ENCODE measurements at regions of chr10 and their contacts with region 1.

Region 1: GRCh38 chr10:123008439-123009205 is at the starts of genes ACADSB and IKZF5:
- DNase-seq: peak; percentile 88 to 99 (median 97)
- ATAC-seq: peak; percentile 83 to 86
- H3K4me3 Mint-ChIP-seq: peak within 1 kb of the TSS; percentile 96 to 100 (median 99)
- H3K27ac Mint-ChIP-seq: peak within 1 kb of the TSS; percentile 99 to 100 (median 100)
- H3K4me1 Mint-ChIP-seq: peaks cover 30 to 66% (median 59%) of the 10 kb centered on the region in 4 donors
- H3K27me3 Mint-ChIP-seq: no peaks in the 10 kb centered on the region
- polyA plus RNA-seq, gene ACADSB: 28.3 to 46.4 (median 33.4) TPM
- polyA plus RNA-seq, gene IKZF5: 13.1 to 22.2 (median 15.8) TPM

Region 2: GRCh38 chr10:122910310-122910709 is 98.3 kb before region 1 on chr10 and contains the start of gene FAM24A:
- POLR2A ChIA-PET with region 1: no interaction called
- DNase-seq: no peak
- ATAC-seq: no peak
- H3K4me3 Mint-ChIP-seq: no peak within 1 kb of the TSS
- H3K27ac Mint-ChIP-seq: no peak within 1 kb of the TSS
- H3K4me1 Mint-ChIP-seq: no peaks in the 10 kb centered on the region
- H3K27me3 Mint-ChIP-seq: peaks cover 7 to 30% (median 14%) of the 10 kb centered on the region in 5 donors
- polyA plus RNA-seq, gene FAM24A: not detected

Region 3: DNA sequence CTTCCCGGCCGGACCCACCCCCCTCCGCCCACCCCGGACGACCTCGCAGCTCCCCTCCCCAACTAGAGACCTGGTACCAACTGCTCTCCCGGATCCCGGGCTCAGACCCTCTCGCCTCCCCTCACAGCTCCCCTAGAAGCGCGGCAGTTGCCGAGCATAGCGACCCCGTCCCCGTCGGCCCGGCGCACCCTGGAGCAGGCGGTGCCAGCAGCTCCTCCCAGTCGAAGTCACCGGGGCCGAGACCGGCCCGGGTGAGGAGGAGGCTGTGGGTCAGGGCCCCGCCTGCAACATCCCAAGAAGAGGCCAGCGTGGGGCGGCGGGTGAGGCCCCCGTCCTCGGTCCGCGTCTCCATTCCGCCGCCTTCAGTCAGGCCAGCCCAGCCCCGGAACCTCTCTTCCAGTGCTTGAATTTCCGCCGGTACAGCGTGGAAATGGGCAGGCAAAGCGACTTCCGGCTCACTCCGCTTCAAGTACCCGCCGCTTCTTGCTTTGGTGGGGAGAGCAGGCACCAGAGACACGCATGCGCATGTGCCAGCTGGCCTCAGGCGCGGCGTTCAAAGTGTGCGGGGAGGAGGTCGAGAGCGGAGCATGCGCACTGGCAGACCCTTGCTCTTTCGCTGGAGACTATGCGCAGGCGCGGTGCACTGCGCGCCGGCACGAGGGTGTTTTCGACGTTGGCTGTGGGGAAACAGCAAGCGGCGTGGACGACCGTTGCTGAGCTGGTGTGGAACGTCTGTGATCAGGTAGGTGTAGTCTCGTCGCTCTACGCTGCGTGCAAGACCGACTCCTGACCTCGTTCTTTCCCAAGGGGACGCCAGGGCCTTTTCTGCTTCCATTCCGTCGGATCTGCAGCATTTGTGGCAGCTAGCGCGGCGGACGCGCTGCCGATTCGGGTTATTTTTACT is 54.5 kb before region 1 on chr10 and contains the start of gene C10orf88:
- POLR2A ChIA-PET with region 1: interaction called, 41 read pairs
- DNase-seq: peak; percentile 89 to 99 (median 97)
- ATAC-seq: peak; percentile 96
- H3K4me3 Mint-ChIP-seq: peak within 1 kb of the TSS; percentile 85 to 95 (median 93)
- H3K27ac Mint-ChIP-seq: peak within 1 kb of the TSS; percentile 84 to 98 (median 90)
- H3K4me1 Mint-ChIP-seq: peaks cover 19 to 38% (median 33%) of the 10 kb centered on the region in 4 donors
- H3K27me3 Mint-ChIP-seq: peaks cover 0 to 3% (median 0%) of the 10 kb centered on the region in 5 donors
- polyA plus RNA-seq, gene C10orf88: 6.0 to 8.8 (median 7.0) TPM

Region 4: DNA sequence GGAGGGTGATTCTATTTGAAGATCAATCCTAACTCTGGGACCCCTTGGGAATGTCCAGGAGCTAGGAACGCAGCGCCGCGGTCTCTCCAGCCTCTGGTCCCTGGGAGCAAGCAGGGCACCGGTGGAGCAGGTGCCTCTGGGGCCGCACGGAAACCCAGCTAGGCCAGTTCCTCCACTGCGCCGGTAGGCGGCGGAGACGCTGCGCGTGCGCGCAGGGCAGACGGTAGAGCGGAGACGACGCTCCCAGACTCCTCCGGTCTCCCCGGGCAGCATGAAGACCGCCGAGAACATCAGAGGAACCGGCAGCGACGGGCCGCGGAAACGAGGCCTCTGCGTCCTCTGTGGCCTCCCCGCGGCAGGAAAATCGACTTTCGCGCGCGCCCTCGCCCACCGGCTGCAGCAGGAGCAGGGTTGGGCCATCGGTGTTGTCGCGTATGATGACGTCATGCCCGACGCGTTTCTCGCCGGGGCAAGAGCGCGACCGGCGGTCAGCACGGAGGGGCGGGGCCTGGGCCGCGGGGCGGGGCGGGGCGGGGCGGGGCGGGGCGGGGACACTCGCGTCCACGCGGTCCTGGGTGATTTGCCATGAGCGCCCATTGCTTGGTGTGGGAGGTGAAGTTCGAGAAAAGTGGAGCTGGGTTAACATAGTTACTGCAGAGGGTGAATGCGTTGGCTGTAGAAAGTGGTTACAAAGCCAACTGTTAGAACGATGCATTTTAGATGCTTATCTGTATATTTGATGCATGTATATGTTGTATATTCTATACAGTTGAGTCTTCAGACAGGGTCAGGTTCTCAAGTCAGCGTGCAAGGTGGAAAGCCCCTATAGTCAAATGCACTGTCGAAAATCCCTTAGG is 28.2 kb before region 1 on chr10 and contains the start of gene PSTK:
- POLR2A ChIA-PET with region 1: interaction called, 66 read pairs
- DNase-seq: peak; percentile 75 to 97 (median 86)
- ATAC-seq: peak; percentile 97
- H3K4me3 Mint-ChIP-seq: peak within 1 kb of the TSS; percentile 89 to 95 (median 92)
- H3K27ac Mint-ChIP-seq: peak within 1 kb of the TSS; percentile 90 to 99 (median 98)
- H3K4me1 Mint-ChIP-seq: peaks cover 14 to 24% (median 19%) of the 10 kb centered on the region in 4 donors
- H3K27me3 Mint-ChIP-seq: no peaks in the 10 kb centered on the region
- polyA plus RNA-seq, gene PSTK: 8.8 to 11.7 (median 11.0) TPM

Region 5: DNA sequence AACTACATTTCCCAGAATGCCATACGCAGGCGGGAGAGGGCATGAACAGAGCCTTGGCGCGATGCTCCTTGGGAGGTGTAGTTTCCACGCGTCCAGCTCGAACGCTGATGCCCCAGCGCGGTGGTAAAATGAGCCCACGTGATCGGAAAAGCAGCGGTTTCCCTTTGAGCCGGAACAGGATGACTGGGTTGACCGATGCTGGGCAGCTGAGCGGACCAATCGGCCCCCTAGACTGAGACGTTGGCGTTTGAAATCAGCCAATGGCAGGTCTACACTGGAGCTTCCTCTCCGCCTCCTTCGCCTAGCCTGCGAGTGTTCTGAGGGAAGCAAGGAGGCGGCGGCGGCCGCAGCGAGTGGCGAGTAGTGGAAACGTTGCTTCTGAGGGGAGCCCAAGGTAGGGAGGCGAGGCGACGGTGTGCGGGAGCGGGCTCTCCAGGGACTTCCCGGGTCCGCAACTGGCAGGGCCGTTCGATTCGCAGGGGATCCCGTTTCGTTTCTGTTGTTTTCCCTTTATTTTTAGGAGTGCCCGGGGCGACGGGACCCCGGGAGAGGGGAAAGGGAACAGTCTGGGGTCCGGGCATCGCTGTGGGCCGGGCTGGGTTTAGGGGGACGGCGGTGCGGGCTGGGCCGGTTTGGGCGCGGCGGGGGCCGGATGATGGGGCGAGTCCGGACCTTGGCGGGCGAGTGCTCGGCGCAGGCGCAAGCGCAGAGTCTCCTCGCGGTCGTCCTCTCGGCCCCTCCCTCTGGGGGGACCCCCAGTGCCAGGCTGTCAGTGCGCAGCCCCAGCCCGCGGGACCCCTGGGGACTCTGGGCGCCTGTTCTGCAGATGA is 145.7 kb after region 1 on chr10 and contains the start of gene BUB3:
- POLR2A ChIA-PET with region 1: interaction called, 10 read pairs
- DNase-seq: peak; percentile 73 to 97 (median 90)
- ATAC-seq: peak; percentile 87 to 90
- H3K4me3 Mint-ChIP-seq: peak within 1 kb of the TSS; percentile 94 to 100 (median 100)
- H3K27ac Mint-ChIP-seq: peak within 1 kb of the TSS; percentile 95 to 99 (median 98)
- H3K4me1 Mint-ChIP-seq: peaks cover 24 to 74% (median 72%) of the 10 kb centered on the region in 4 donors
- H3K27me3 Mint-ChIP-seq: peaks cover 0 to 19% (median 14%) of the 10 kb centered on the region in 5 donors
- polyA plus RNA-seq, gene BUB3: 217 to 247 (median 243) TPM

Region 6: DNA sequence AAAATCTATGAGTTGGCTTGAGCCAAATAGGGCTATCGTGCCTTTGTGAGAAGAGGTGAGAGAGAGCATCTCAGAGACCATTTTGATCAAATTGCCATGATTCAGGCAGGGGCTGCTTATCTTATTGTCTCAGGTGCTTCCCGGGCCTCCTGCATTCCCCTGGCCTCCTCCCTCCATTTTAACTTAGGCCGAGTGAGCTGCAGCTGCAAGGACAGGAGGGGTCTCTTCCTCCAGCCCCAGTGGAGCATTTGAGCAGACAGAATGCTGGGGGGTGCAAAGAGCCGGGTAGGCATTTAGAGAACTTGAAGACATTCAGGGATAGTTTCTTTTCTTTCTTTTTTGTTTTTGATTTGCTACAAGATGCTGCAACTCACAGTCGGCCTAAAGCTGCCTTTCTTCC is 204.6 kb after region 1 on chr10:
- POLR2A ChIA-PET with region 1: no interaction called
- DNase-seq: no peak
- ATAC-seq: no peak
- H3K4me3 Mint-ChIP-seq: no peak overlapping the region
- H3K27ac Mint-ChIP-seq: no peak overlapping the region
- H3K4me1 Mint-ChIP-seq: peaks cover 0 to 3% (median 0%) of the 10 kb centered on the region in 4 donors
- H3K27me3 Mint-ChIP-seq: no peaks in the 10 kb centered on the region

Region 7: GRCh38 chr10:124231168-124232155 is 1222.8 kb after region 1 on chr10:
- POLR2A ChIA-PET with region 1: no interaction called
- DNase-seq: peak in 9 of 10 donors; percentile 14 to 90 (median 62)
- ATAC-seq: peak; percentile 72 to 74
- H3K4me3 Mint-ChIP-seq: peak overlapping the region in 5 of 10 donors; percentile 11 to 78 (median 51)
- H3K27ac Mint-ChIP-seq: peak overlapping the region in 7 of 10 donors; percentile 11 to 100 (median 76)
- H3K4me1 Mint-ChIP-seq: no peaks in the 10 kb centered on the region
- H3K27me3 Mint-ChIP-seq: peaks cover 0 to 4% (median 0%) of the 10 kb centered on the region in 5 donors

Measured in naive thymus-derived CD8-positive, alpha-beta T cell (primary cell).